Caki2 (cell line): ENCODE measurements at regions of chrX and their contacts with region 1.

Region 1: GRCh38 chrX:2679534-2680485 is 11.3 kb upstream of the CD99 start:
- DNase-seq: no peak

Region 2: GRCh38 chrX:2819345-2820135 is 139.7 kb after region 1 on chrX:
- in situ Hi-C with region 1: loop called (anchors 10 kb)
- DNase-seq: peak; percentile 19

Region 3: GRCh38 chrX:2913118-2913517 is 233.3 kb after region 1 on chrX:
- in situ Hi-C with region 1: no loop called
- DNase-seq: no peak